Dendritic cell treated with granulocyte-macrophage colony-stimulating factor and Interleukin-4, amounts not matched to agents 40 ng/mL and 50 ng/mL, for 4 days (primary cell): ENCODE measurements at regions of chr4 and their contacts with region 1.

Region 1: GRCh38 chr4:1726146-1726934 is 5.0 kb downstream of the TACC3 start:
- H3K4me3 Mint-ChIP-seq: peak overlapping the region; percentile 71
- H3K27ac Mint-ChIP-seq: peak overlapping the region; percentile 96
- H3K4me1 Mint-ChIP-seq: peaks cover 84% of the 10 kb centered on the region
- H3K27me3 Mint-ChIP-seq: no peaks in the 10 kb centered on the region

Region 2: DNA sequence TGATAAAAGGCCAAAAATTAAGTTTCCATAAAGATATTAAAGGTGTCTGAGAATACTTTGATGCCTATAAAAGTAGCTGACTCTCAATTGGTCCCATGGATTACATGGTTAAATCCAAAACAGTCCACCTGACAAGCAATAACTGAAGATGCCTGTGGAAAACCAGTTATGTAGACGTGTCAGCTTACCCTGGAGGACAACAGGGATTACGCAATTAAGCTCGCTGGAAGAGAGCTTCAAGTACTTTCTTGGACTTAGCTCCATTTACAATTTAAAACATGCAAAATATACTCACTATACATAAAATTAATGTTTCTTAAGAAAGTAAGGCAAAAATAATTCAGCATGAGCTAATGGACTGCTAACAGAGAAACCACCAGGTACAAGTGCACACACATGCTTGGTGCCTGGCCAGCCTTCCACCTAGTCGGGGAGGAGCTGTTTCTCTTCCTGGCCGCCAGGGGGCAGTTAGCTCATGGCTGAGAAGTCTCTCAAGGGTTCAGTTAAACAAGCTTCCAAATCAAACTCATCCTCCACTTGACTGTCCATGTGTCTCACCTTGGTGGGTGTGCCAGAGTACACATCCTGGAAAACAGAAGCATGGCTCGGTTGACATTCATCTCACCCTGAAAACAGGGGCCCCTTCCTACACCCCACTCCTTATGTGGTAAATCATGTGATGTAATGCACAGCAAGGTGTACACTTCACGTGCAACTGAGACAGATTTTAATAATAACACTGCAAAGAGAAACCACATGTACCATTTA is 33.0 kb before region 1 on chr4:
- intact Hi-C with region 1: loop called (anchors 1 kb)
- H3K4me3 Mint-ChIP-seq: no peak overlapping the region
- H3K27ac Mint-ChIP-seq: no peak overlapping the region
- H3K4me1 Mint-ChIP-seq: no peaks in the 10 kb centered on the region
- H3K27me3 Mint-ChIP-seq: no peaks in the 10 kb centered on the region